AG04450 (cell line): ENCODE measurements at regions of chr1 and their contacts with region 1.

Region 1: GRCh38 chr1:110829955-110830553 is 42.9 kb upstream of the CD53 start:
- DNase-seq: no peak
- H3K4me3 ChIP-seq: no peak overlapping the region
- H3K27ac ChIP-seq: no peak overlapping the region
- H3K27me3 ChIP-seq: no peaks in the 10 kb centered on the region
- CTCF ChIP-seq: peak; percentile 77

Region 2: GRCh38 chr1:110857964-110858948 is 28.2 kb after region 1 on chr1:
- CTCF ChIA-PET with region 1: interaction called, 13 read pairs
- POLR2A ChIA-PET with region 1: no interaction called
- DNase-seq: no peak
- H3K4me3 ChIP-seq: no peak overlapping the region
- H3K27ac ChIP-seq: no peak overlapping the region
- H3K27me3 ChIP-seq: no peaks in the 10 kb centered on the region
- CTCF ChIP-seq: no peak